ENCODE measurements at regions of chr22 and their contacts with region 1.

Region 1: GRCh38 chr22:32660292-32660691 is 141.2 kb upstream of the TIMP3 start:
- DNase-seq: peak; percentile 49 to 72
- H3K4me3 ChIP-seq: no peak overlapping the region
- H3K4me1 ChIP-seq: no peaks in the 10 kb centered on the region
- H3K27me3 ChIP-seq: no peaks in the 10 kb centered on the region

Region 2: DNA sequence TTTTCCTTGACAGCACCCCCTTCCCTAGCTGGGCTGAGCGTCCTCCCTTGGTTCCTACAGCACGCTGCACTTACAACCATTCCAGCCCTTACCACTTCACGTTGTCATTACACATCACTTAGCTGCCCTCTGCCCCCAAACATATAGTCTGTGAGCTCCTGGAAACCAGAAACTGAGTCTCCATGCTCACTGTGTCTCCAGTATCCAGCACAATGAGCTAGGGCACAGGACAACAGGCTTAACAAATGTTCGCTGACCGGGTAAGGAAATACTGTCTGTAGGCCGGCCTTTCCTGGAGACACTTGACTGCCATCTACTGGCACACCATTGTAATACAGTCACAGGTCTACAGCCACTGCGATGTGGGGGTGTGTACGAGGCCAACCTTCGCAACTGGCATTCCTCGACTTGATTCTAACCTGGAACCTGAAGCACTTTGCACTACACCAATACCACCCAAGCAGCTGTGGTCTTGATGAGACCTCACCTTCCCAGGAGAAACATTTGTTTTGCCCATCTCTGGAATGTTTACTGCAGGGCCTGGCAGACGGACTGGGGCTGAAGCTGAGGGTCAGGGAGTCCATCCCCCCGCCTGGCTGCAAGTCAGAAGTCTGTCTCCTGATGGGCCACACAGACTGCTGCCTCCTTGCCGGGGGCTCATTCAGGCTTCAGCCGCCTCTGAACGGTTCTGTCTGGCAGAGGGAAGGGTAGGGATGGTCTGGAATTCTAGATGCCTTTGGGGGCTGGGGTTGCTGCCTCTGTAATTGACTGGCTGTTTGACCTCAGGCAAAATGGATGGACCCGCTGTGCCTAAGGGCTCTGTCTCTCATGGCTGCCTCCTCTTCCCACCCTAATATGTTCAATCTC is 325.8 kb after region 1 on chr22:
- in situ Hi-C with region 1: loop called (anchors 25 kb)
- DNase-seq: peak; percentile 62 to 82
- H3K4me3 ChIP-seq: no peak overlapping the region
- H3K4me1 ChIP-seq: peaks cover 9% of the 10 kb centered on the region
- H3K27me3 ChIP-seq: no peaks in the 10 kb centered on the region

Region 3: GRCh38 chr22:33209930-33210784 is 549.9 kb after region 1 on chr22:
- in situ Hi-C with region 1: loop called (anchors 25 kb)
- DNase-seq: peak; percentile 59 to 71
- H3K4me3 ChIP-seq: no peak overlapping the region
- H3K4me1 ChIP-seq: no peaks in the 10 kb centered on the region
- H3K27me3 ChIP-seq: peaks cover 7% of the 10 kb centered on the region; the same call in 1 of the 2 replicates

Measured in HAP-1 (cell line).